Activated CD8-positive, alpha-beta T cell treated with anti-CD3 and anti-CD28 coated beads for 36 hours (primary cell): ENCODE measurements at regions of chr16 and their contacts with region 1.

Region 1: GRCh38 chr16:56938422-56939156 is 6.6 kb downstream of the HERPUD1 start:
- DNase-seq: peak; percentile 85
- ATAC-seq: peak; percentile 77
- H3K4me3 Mint-ChIP-seq: peak overlapping the region; percentile 54
- H3K27ac Mint-ChIP-seq: peak overlapping the region; percentile 95
- H3K4me1 Mint-ChIP-seq: peaks cover 81% of the 10 kb centered on the region
- H3K27me3 Mint-ChIP-seq: no peaks in the 10 kb centered on the region
- CTCF ChIP-seq: no peak

Region 2: GRCh38 chr16:56637814-56638750 is 300.5 kb before region 1 on chr16 and contains the start of gene MT1A:
- CTCF ChIA-PET with region 1: no interaction called
- POLR2A ChIA-PET with region 1: no interaction called
- intact Hi-C with region 1: no loop called
- DNase-seq: no peak
- ATAC-seq: peak; percentile 31
- H3K4me3 Mint-ChIP-seq: peak within 1 kb of the TSS; percentile 47
- H3K27ac Mint-ChIP-seq: no peak within 1 kb of the TSS
- H3K4me1 Mint-ChIP-seq: peaks cover 24% of the 10 kb centered on the region
- H3K27me3 Mint-ChIP-seq: peaks cover 75% of the 10 kb centered on the region
- CTCF ChIP-seq: no peak
- total RNA-seq, gene MT1A: not detected

Region 3: GRCh38 chr16:56911771-56912571 is 26.6 kb before region 1 on chr16:
- CTCF ChIA-PET with region 1: no interaction called
- POLR2A ChIA-PET with region 1: interaction called, 33 read pairs
- intact Hi-C with region 1: no loop called
- DNase-seq: no peak
- ATAC-seq: no peak
- H3K4me3 Mint-ChIP-seq: no peak overlapping the region
- H3K27ac Mint-ChIP-seq: no peak overlapping the region
- H3K4me1 Mint-ChIP-seq: peaks cover 34% of the 10 kb centered on the region
- H3K27me3 Mint-ChIP-seq: no peaks in the 10 kb centered on the region
- CTCF ChIP-seq: no peak

Region 4: DNA sequence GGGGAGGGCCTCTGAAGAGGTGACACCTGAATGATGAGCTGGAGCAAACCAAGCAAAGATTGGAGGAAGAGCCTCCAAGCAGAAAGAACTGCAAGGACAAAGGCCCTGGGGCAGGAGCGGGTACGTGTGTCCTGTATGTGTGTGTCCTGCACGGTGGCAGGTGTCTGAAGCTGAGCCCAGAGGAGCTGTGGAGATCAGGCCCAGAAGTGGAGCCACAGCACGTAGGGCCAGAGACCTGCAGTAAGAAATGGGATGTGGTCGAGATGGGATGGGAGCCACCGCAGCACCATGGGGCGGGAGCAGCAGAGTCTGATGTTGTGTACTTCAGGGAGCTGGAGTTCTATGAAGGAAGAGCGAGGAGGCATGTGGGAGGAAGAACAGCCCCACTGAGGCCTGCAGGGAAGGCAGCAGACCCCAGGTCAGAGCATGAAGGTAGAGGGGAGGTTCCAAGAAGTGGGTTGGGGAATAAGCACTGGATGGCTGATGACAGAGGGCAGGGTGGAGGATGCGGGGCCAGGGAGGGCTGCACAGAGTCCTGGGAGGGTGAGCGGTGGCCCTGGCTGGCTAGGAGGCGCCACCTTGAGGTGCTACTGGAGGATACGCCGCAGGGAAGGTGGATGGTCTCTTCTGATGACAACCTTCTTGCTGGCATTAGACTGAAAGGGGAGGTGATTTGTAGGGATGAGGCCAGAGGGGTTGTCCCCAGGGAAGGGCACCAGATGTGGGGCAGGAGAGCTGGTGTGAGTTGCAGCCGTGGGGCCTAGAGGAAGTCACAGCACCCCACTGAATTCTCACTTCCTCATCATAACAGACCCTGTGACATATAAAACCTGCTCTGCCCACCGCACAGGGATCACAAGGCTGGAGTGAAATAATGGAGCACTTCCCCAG is 12.5 kb after region 1 on chr16:
- CTCF ChIA-PET with region 1: interaction called, 19 read pairs
- POLR2A ChIA-PET with region 1: interaction called, 145 read pairs
- intact Hi-C with region 1: no loop called
- DNase-seq: peak; percentile 82
- ATAC-seq: peak; percentile 95
- H3K4me3 Mint-ChIP-seq: no peak overlapping the region
- H3K27ac Mint-ChIP-seq: peak overlapping the region; percentile 10
- H3K4me1 Mint-ChIP-seq: peaks cover 19% of the 10 kb centered on the region
- H3K27me3 Mint-ChIP-seq: no peaks in the 10 kb centered on the region
- CTCF ChIP-seq: peak; percentile 80